ENCODE measurements at regions of chr3 and their contacts with region 1.

Region 1: DNA sequence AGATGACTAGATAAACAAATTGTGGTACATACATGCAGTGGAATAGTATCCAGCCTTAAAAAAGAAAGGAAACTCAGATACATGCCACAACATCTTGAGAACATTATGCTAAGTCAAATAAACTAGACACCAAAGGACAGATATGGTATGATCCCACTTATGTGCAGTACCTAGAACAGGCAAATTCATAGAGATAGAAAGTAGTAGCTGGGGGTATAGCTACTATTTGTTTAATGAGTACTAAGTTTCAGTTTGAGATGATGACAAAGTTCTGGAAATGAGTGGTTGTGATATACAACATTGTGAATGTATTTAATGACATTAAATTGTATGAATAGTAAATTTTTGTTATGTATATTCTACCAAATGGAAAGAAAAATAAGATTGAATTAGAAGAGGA is 477.2 kb upstream of the CFAP20DC start:
- DNase-seq: no peak
- H3K4me3 Mint-ChIP-seq: no peak overlapping the region
- H3K27ac Mint-ChIP-seq: peak overlapping the region; percentile 40
- H3K4me1 Mint-ChIP-seq: peaks cover 14% of the 10 kb centered on the region
- H3K27me3 Mint-ChIP-seq: no peaks in the 10 kb centered on the region

Region 2: GRCh38 chr3:59559721-59560435 is 32.9 kb after region 1 on chr3:
- intact Hi-C with region 1: loop called (anchors 1 kb)
- DNase-seq: no peak
- H3K4me3 Mint-ChIP-seq: no peak overlapping the region
- H3K27ac Mint-ChIP-seq: peak overlapping the region; percentile 56
- H3K4me1 Mint-ChIP-seq: peaks cover 20% of the 10 kb centered on the region
- H3K27me3 Mint-ChIP-seq: no peaks in the 10 kb centered on the region

Region 3: GRCh38 chr3:59566481-59566975 is 39.5 kb after region 1 on chr3:
- intact Hi-C with region 1: loop called (anchors 1 kb)
- DNase-seq: no peak
- H3K4me3 Mint-ChIP-seq: no peak overlapping the region
- H3K27ac Mint-ChIP-seq: no peak overlapping the region
- H3K4me1 Mint-ChIP-seq: peaks cover 14% of the 10 kb centered on the region
- H3K27me3 Mint-ChIP-seq: peaks cover 2% of the 10 kb centered on the region